ENCODE measurements at regions of chr7 and their contacts with region 1.

Region 1: DNA sequence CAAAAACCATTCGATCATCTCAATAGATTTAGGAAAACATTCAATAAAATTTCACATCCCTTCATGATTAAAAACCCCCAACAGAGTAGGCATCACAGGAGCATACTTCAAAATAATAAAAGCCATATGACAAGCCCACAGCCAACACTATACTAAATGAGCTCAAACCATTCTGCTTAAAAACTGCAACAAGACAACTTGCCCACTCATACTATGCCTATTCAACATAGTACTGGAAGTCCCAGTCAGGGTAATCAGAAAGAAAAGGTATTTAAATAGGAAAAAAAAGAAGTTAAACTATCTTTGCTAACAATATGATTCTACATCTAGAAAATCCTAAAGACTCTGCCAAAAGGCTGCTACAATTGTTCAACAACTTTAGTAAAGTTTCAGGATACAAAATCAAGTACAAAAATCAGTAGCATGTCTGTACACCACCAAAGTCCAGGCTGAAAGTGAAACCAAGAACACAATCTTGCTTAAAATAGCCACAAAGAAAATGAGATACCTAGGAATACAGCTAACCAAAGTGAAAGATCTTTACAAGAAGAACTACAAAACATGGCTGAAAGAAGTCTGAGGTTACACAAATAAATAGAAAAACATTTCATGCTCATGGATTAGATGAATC is 882.6 kb downstream of the GRM8 start:
- DNase-seq: no peak
- ATAC-seq: no peak
- H3K4me3 ChIP-seq: no peak overlapping the region
- H3K27ac ChIP-seq: no peak overlapping the region
- H3K4me1 ChIP-seq: no peaks in the 10 kb centered on the region
- H3K27me3 ChIP-seq: no peaks in the 10 kb centered on the region
- CTCF ChIP-seq: no peak

Region 2: DNA sequence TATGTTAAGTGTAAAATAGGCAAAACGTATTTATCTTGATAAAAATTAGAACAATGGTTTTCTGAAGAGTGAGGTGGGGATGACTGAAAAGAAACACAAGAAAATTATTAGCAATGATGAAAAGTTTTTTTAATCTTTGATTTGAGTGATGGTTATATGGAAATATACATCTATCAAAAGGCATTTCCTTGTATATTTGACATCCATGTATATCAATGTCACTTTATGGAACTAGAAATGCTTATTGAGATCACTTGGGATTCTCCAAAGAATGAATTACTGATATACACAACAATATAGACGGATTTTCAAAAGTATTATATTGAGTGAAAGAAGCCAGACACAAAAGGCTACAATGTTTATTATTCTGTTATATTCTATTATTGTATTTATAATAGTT is 398.5 kb before region 1 on chr7:
- CTCF ChIA-PET with region 1: no interaction called
- POLR2A ChIA-PET with region 1: no interaction called
- intact Hi-C with region 1: loop called (anchors 2 kb)
- DNase-seq: no peak
- ATAC-seq: no peak
- H3K4me3 ChIP-seq: no peak overlapping the region
- H3K27ac ChIP-seq: no peak overlapping the region
- H3K4me1 ChIP-seq: no peaks in the 10 kb centered on the region
- H3K27me3 ChIP-seq: no peaks in the 10 kb centered on the region
- CTCF ChIP-seq: no peak

Region 3: GRCh38 chr7:126394406-126394805 is 24.3 kb after region 1 on chr7:
- CTCF ChIA-PET with region 1: no interaction called
- POLR2A ChIA-PET with region 1: no interaction called
- intact Hi-C with region 1: no loop called
- DNase-seq: no peak
- ATAC-seq: no peak
- H3K4me3 ChIP-seq: no peak overlapping the region
- H3K27ac ChIP-seq: no peak overlapping the region
- H3K4me1 ChIP-seq: no peaks in the 10 kb centered on the region
- H3K27me3 ChIP-seq: no peaks in the 10 kb centered on the region
- CTCF ChIP-seq: no peak